K562 (cell line): ENCODE measurements at regions of chr1 and their contacts with region 1.

Region 1: DNA sequence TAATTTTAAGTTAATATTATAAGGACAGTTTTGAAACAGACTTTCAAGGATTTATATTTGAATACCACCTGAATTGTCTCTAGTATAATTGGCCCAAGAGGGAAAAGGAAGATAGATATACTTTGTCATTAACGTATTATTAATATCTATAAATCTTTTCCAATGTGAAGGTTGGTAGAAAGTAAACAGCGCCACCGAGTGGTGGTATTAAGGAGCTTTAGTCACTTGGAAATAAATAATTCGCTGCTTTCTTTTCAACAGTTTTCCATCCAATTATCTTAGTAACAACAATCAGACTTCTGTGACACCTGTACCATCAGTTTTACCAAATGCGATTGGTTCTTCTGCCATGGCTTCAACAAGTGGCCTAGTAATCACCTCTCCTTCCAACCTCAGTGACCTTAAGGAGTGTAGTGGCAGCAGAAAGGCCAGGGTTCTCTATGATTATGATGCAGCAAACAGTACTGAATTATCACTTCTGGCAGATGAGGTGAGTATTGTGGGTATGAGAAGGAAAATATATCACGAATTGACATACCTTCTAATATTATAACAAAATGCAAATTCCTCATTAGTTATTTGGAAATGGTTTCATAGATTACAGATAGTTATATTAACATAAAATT is 37.7 kb downstream of the SH3GLB1 start:
- DNase-seq: peak; percentile 23 to 57 (median 33)
- ATAC-seq: peak; percentile 44; the same call in 2 of the 3 replicates
- H3K4me3 ChIP-seq: no peak overlapping the region
- H3K27ac ChIP-seq: no peak overlapping the region
- H3K4me1 ChIP-seq: no peaks in the 10 kb centered on the region
- H3K27me3 ChIP-seq: no peaks in the 10 kb centered on the region
- CTCF ChIP-seq: peak; percentile 52 to 71 (median 59); a peak in 5 of 6 replicates
- EP300 ChIP-seq: no peak
- POLR2A ChIP-seq: no peak
- RAD21 ChIP-seq: peak; percentile 58 to 64

Region 2: GRCh38 chr1:86380257-86380861 is 361.7 kb before region 1 on chr1:
- CTCF ChIA-PET with region 1: no interaction called
- POLR2A ChIA-PET with region 1: no interaction called
- in situ Hi-C with region 1: no loop called
- intact Hi-C with region 1: loop called (anchors 5 kb)
- DNase-seq: peak; percentile 40 to 68 (median 45)
- ATAC-seq: peak; percentile 72
- H3K4me3 ChIP-seq: no peak overlapping the region
- H3K27ac ChIP-seq: no peak overlapping the region
- H3K4me1 ChIP-seq: no peaks in the 10 kb centered on the region
- H3K27me3 ChIP-seq: no peaks in the 10 kb centered on the region
- CTCF ChIP-seq: peak; percentile 53 to 77 (median 58); a peak in 4 of 6 replicates
- EP300 ChIP-seq: no peak
- POLR2A ChIP-seq: no peak
- RAD21 ChIP-seq: peak; percentile 87 to 88

Region 3: GRCh38 chr1:86470859-86471258 is 271.2 kb before region 1 on chr1:
- CTCF ChIA-PET with region 1: interaction called, 3 read pairs
- POLR2A ChIA-PET with region 1: no interaction called
- in situ Hi-C with region 1: no loop called
- intact Hi-C with region 1: loop called (anchors 2 kb)
- DNase-seq: no peak
- ATAC-seq: no peak
- H3K4me3 ChIP-seq: no peak overlapping the region
- H3K27ac ChIP-seq: no peak overlapping the region
- H3K4me1 ChIP-seq: no peaks in the 10 kb centered on the region; a peak in 1 of 5 replicates
- H3K27me3 ChIP-seq: no peaks in the 10 kb centered on the region; a peak in 1 of 5 replicates
- CTCF ChIP-seq: no peak
- EP300 ChIP-seq: no peak
- POLR2A ChIP-seq: no peak
- RAD21 ChIP-seq: no peak

Region 4: GRCh38 chr1:86487131-86487810 is 254.8 kb before region 1 on chr1:
- CTCF ChIA-PET with region 1: no interaction called
- POLR2A ChIA-PET with region 1: no interaction called
- in situ Hi-C with region 1: no loop called
- intact Hi-C with region 1: no loop called
- DNase-seq: no peak
- ATAC-seq: no peak
- H3K4me3 ChIP-seq: no peak overlapping the region
- H3K27ac ChIP-seq: no peak overlapping the region
- H3K4me1 ChIP-seq: no peaks in the 10 kb centered on the region
- H3K27me3 ChIP-seq: peaks cover 4 to 10% of the 10 kb centered on the region in 2 experiments; a peak in 4 of 5 replicates
- CTCF ChIP-seq: no peak
- EP300 ChIP-seq: no peak
- POLR2A ChIP-seq: no peak
- RAD21 ChIP-seq: no peak

Region 5: DNA sequence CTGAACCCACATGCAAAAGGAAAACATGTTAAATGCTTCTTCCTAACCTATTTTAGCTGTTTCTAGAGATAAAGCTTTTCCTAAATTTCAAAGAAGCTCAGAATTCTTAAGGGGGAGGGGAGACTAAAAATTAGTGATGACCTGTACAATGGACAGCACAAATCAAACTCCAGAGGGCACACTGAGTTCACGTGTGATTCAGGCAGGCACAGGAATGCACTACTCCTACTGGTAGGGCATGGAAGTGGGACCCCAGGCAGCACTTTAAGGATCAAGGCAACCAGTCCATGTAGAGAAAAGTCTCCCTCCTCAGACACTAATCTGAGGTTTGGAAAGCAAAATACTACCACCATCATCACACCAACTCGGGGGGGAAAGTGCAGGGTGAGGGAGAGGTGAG is 226.5 kb before region 1 on chr1:
- CTCF ChIA-PET with region 1: interaction called, 4 read pairs
- POLR2A ChIA-PET with region 1: no interaction called
- in situ Hi-C with region 1: no loop called
- intact Hi-C with region 1: loop called (anchors 2 kb)
- DNase-seq: peak; percentile 17 to 34 (median 24)
- ATAC-seq: peak; percentile 85
- H3K4me3 ChIP-seq: no peak overlapping the region
- H3K27ac ChIP-seq: no peak overlapping the region
- H3K4me1 ChIP-seq: no peaks in the 10 kb centered on the region
- H3K27me3 ChIP-seq: no peaks in the 10 kb centered on the region
- CTCF ChIP-seq: peak; percentile 50 to 97 (median 79)
- EP300 ChIP-seq: no peak
- POLR2A ChIP-seq: no peak
- RAD21 ChIP-seq: peak; percentile 35 to 63

Region 6: DNA sequence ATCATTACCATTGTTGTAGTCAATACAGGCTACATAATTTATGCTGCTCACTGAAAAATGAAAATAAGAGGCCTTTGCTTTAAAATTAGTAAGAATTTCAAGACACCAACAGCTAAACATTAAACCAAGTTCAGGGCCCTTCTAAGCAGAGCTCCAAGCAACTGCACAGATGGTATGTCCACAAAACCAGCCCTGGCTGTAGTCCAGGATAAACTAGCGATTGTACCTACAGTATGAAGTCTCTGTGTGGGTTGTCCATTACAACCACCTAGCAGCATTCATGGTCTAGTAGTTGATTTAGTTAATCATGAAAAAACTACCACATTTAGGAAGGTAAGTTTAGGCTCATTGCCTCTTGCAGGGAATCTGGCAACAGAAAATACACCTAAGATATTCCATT is 159.9 kb before region 1 on chr1:
- CTCF ChIA-PET with region 1: no interaction called
- POLR2A ChIA-PET with region 1: no interaction called
- in situ Hi-C with region 1: no loop called
- intact Hi-C with region 1: loop called (anchors 10 kb)
- DNase-seq: no peak
- ATAC-seq: no peak
- H3K4me3 ChIP-seq: no peak overlapping the region
- H3K27ac ChIP-seq: no peak overlapping the region
- H3K4me1 ChIP-seq: no peaks in the 10 kb centered on the region
- H3K27me3 ChIP-seq: no peaks in the 10 kb centered on the region; a peak in 1 of 5 replicates
- CTCF ChIP-seq: no peak
- EP300 ChIP-seq: no peak
- POLR2A ChIP-seq: no peak
- RAD21 ChIP-seq: no peak

Region 7: DNA sequence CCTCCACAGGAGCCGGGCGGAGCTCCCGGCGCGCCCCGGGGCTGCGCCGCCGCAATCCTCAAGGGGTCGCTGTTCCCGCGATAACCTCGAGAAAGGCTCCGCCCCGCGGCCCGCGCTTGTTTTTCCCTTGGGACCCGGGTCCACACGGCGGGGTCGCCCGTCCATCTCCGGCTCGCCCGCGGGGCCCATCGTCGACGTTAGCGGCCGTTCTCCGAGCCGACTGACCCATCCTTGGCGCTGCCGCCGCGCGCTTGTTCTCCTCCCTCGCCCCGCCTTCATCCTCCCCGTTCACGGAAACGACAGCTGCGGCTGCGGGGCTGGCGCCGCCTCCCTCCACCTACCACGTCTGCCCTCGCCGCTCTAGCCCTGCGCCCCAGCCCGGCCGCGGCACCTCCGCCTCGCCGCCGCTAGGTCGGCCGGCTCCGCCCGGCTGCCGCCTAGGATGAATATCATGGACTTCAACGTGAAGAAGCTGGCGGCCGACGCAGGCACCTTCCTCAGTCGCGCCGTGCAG is 37.5 kb before region 1 on chr1 and contains the start of gene SH3GLB1:
- CTCF ChIA-PET with region 1: no interaction called
- POLR2A ChIA-PET with region 1: interaction called, 3 read pairs
- in situ Hi-C with region 1: no loop called
- intact Hi-C with region 1: loop called (anchors 2 kb)
- DNase-seq: peak; percentile 83 to 94 (median 84)
- ATAC-seq: peak; percentile 93
- H3K4me3 ChIP-seq: peak within 1 kb of the TSS; percentile 84
- H3K27ac ChIP-seq: peak within 1 kb of the TSS; percentile 87
- H3K4me1 ChIP-seq: peaks cover 12 to 18% of the 10 kb centered on the region in 2 experiments
- H3K27me3 ChIP-seq: no peaks in the 10 kb centered on the region
- CTCF ChIP-seq: peak; percentile 88 to 90 (median 89)
- EP300 ChIP-seq: 0 out of 2 replicates have a peak, but pooled peaks have one; percentile 9
- POLR2A ChIP-seq: peak; percentile 85
- RAD21 ChIP-seq: peak; percentile 49 to 59; a peak in 3 of 4 replicates
- polyA plus RNA-seq, gene SH3GLB1: 10.2 to 10.4 TPM

Region 8: GRCh38 chr1:86731416-86731815 is 10.6 kb before region 1 on chr1:
- CTCF ChIA-PET with region 1: no interaction called
- POLR2A ChIA-PET with region 1: no interaction called
- in situ Hi-C with region 1: no loop called
- intact Hi-C with region 1: no loop called
- DNase-seq: no peak
- ATAC-seq: no peak
- H3K4me3 ChIP-seq: no peak overlapping the region
- H3K27ac ChIP-seq: no peak overlapping the region
- H3K4me1 ChIP-seq: no peaks in the 10 kb centered on the region
- H3K27me3 ChIP-seq: no peaks in the 10 kb centered on the region
- CTCF ChIP-seq: no peak
- EP300 ChIP-seq: no peak
- POLR2A ChIP-seq: no peak
- RAD21 ChIP-seq: no peak